Posterior vena cava (tissue), 2 donors: ENCODE measurements at regions of chr2 and their contacts with region 1.

Region 1: DNA sequence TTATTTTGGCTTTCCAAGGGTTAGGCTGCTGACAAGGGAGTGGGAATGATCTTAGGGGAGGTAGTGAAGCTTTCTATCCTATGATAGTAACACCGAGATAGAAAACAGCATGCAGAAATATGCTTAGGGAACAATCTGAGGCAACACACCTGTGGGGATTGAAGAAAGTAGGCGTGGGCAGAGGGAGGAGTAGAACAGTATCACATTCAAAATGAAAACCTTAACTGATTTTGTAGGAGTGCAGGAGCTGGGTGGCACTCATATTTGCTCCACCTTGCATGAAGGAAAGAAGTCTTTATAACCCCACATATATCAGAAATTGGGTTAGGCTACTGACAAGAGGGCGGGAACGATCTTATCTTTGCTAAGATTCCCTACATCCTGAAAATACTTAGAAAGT is 762.2 kb upstream of the CNTNAP5 start:
- DNase-seq: no peak

Region 2: DNA sequence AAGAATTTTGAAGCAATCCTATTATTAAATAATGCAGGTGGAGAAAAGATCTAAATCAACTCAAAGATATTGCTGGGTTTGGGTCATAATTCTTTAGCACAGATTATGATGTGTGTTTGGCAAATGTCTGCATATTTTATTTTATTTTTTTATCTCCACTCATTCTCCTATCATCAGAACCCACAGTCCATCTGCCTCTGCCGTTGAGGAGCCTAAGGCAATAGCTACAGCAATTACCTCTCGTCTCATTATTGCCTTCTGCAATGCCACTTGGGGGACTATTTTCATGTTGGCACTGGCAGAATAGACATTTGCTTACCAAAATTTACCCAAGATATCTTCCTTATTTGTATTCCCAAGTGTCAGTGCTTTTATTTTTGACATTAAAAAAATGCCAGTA is 53.7 kb before region 1 on chr2:
- intact Hi-C with region 1: loop called in 1 of 2 experiments (anchors 2 kb)
- DNase-seq: no peak